ENCODE measurements at regions of chr4 and their contacts with region 1.

Region 1: GRCh38 chr4:109998867-109999584 is 86.3 kb downstream of the EGF start:
- DNase-seq: peak; percentile 76
- ATAC-seq: peak; percentile 47
- H3K4me3 ChIP-seq: no peak overlapping the region
- H3K4me3 Mint-ChIP-seq: no peak overlapping the region
- H3K27ac ChIP-seq: no peak overlapping the region
- H3K27ac Mint-ChIP-seq: no peak overlapping the region
- H3K4me1 ChIP-seq: peaks cover 2 to 5% of the 10 kb centered on the region in 2 donors
- H3K4me1 Mint-ChIP-seq: peaks cover 11% of the 10 kb centered on the region
- H3K27me3 ChIP-seq: no peaks in the 10 kb centered on the region
- H3K27me3 Mint-ChIP-seq: peaks cover 10% of the 10 kb centered on the region
- CTCF ChIP-seq: peak; percentile 81

Region 2: GRCh38 chr4:110193822-110194761 is 195.1 kb after region 1 on chr4:
- CTCF ChIA-PET with region 1: no interaction called
- POLR2A ChIA-PET with region 1: no interaction called
- intact Hi-C with region 1: loop called (anchors 5 kb)
- DNase-seq: peak; percentile 82
- ATAC-seq: peak; percentile 78
- H3K4me3 ChIP-seq: no peak overlapping the region
- H3K4me3 Mint-ChIP-seq: peak overlapping the region; percentile 4
- H3K27ac ChIP-seq: peak overlapping the region; percentile 1 to 71
- H3K27ac Mint-ChIP-seq: peak overlapping the region; percentile 68
- H3K4me1 ChIP-seq: peaks cover 16 to 17% of the 10 kb centered on the region in 2 donors
- H3K4me1 Mint-ChIP-seq: peaks cover 30% of the 10 kb centered on the region
- H3K27me3 ChIP-seq: no peaks in the 10 kb centered on the region
- H3K27me3 Mint-ChIP-seq: no peaks in the 10 kb centered on the region
- CTCF ChIP-seq: no peak

Region 3: GRCh38 chr4:110310795-110311194 is 311.8 kb after region 1 on chr4:
- CTCF ChIA-PET with region 1: no interaction called
- POLR2A ChIA-PET with region 1: no interaction called
- intact Hi-C with region 1: no loop called
- DNase-seq: no peak
- ATAC-seq: no peak
- H3K4me3 ChIP-seq: no peak overlapping the region
- H3K4me3 Mint-ChIP-seq: no peak overlapping the region
- H3K27ac ChIP-seq: no peak overlapping the region
- H3K27ac Mint-ChIP-seq: no peak overlapping the region
- H3K4me1 ChIP-seq: no peaks in the 10 kb centered on the region
- H3K4me1 Mint-ChIP-seq: no peaks in the 10 kb centered on the region
- H3K27me3 ChIP-seq: no peaks in the 10 kb centered on the region
- H3K27me3 Mint-ChIP-seq: peaks cover 7% of the 10 kb centered on the region
- CTCF ChIP-seq: no peak

Measured in B cell (primary cell).